Activated T-helper 2 cell treated with anti-CD3 and anti-CD28 coated beads, Interferon-gamma antibody, Interleukin-2, Interleukin-4, amounts not matched to agents 10 μg/mL and 5 μg/mL and 100 μg/mL, durations not matched to agents 14 hours and 24 hours and 36 hours (primary cell): ENCODE measurements at regions of chr22 and their contacts with region 1.

Region 1: GRCh38 chr22:20858615-20859416 is at the starts of genes PI4KA and SNAP29:
- DNase-seq: peak; percentile 98
- H3K4me3 Mint-ChIP-seq: peak within 1 kb of the TSS; percentile 87
- H3K27ac Mint-ChIP-seq: peak within 1 kb of the TSS; percentile 73
- H3K4me1 Mint-ChIP-seq: peaks cover 37% of the 10 kb centered on the region
- H3K27me3 Mint-ChIP-seq: no peaks in the 10 kb centered on the region
- total RNA-seq, gene PI4KA: 73.4 and 77.7 TPM in 2 replicates
- total RNA-seq, gene SNAP29: 24.2 and 31.4 TPM in 2 replicates

Region 2: DNA sequence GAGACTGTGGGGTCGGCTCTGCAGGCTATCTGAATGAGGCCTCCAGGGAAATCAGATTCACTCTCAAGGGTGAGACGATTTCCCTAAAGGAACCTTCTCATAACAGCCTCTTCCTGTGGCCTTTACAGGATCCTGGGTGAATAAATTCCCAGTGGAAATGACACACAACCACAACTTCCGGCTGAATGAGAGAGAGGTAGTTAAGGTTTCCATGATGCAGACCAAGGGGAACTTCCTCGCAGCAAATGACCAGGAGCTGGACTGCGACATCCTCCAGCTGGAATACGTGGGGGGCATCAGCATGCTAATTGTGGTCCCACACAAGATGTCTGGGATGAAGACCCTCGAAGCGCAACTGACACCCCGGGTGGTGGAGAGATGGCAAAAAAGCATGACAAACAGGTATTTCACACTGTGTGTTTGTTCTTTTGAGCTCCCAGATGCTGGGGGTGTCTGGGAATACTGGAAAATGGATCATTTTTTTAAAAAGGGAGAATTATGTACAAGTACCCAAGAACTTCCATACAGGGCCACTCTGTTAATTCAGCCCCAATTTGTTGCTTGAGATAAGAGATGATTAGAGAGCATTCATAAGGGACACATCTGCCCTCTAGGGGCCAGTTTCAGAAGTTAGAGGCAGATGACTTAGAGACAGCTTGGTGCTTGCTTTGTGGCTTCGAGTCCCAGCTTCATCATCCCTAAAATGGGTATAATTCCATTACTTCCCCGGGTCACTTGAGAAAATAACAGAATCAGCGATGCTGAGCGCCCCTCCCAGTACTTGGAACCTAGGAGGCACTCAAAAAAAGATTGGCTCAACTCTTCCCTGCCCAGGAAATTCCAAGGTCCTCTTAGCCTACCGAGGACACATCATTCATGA is 74.7 kb before region 1 on chr22:
- intact Hi-C with region 1: loop called (anchors 10 kb)
- DNase-seq: peak; percentile 16
- H3K4me3 Mint-ChIP-seq: no peak overlapping the region
- H3K27ac Mint-ChIP-seq: peak overlapping the region; percentile 17
- H3K4me1 Mint-ChIP-seq: peaks cover 29% of the 10 kb centered on the region
- H3K27me3 Mint-ChIP-seq: no peaks in the 10 kb centered on the region

Region 3: GRCh38 chr22:20899827-20900423 is 41.1 kb after region 1 on chr22:
- intact Hi-C with region 1: no loop called
- DNase-seq: no peak
- H3K4me3 Mint-ChIP-seq: no peak overlapping the region
- H3K27ac Mint-ChIP-seq: no peak overlapping the region
- H3K4me1 Mint-ChIP-seq: no peaks in the 10 kb centered on the region
- H3K27me3 Mint-ChIP-seq: peaks cover 8% of the 10 kb centered on the region

Region 4: DNA sequence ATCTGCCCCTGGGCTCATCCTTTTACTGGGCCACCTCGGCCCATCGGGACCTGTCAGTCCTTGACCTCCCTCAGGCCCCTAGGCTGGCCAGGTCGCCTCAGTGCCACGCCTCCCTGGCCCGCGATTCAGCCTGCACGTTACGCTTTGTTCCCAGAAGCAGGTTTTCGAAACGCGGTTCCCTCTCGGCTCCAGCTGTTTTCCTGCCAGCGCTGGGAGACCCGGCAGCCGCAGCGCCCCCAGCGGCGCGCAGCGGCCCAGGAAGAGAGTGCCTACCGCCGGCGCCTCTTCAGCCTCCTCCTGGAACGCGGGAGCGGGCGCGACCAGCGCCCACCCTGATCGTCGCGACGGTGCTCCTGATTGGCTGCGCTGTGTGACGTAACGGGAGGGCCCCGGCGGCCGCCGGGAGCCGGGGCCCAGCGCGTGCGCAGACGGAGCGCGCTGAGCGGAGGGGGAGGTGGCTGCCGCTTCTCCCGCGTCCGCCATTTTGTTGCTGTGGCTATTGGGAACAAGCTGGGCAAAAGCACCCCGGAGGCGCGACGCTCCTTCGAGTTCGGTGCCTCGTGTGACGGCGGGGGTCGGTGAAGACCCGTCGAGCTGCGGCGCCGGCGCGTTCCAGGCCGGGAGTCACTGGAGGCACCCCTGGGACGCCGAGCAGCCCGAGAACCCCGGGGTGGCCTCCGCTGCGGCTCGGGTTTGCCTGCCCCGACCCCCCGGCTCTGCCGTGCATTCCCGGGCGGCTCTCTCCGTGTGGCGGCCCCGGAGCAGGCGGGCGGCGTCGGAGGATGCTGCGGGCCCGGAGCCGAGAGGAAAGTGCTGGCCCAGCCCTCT is 58.4 kb after region 1 on chr22 and contains the start of gene CRKL:
- intact Hi-C with region 1: loop called (anchors 1 kb)
- DNase-seq: peak; percentile 95
- H3K4me3 Mint-ChIP-seq: peak within 1 kb of the TSS; percentile 94
- H3K27ac Mint-ChIP-seq: peak within 1 kb of the TSS; percentile 82
- H3K4me1 Mint-ChIP-seq: peaks cover 27% of the 10 kb centered on the region
- H3K27me3 Mint-ChIP-seq: peaks cover 3% of the 10 kb centered on the region
- total RNA-seq, gene CRKL: 79.2 and 80.1 TPM in 2 replicates

Region 5: DNA sequence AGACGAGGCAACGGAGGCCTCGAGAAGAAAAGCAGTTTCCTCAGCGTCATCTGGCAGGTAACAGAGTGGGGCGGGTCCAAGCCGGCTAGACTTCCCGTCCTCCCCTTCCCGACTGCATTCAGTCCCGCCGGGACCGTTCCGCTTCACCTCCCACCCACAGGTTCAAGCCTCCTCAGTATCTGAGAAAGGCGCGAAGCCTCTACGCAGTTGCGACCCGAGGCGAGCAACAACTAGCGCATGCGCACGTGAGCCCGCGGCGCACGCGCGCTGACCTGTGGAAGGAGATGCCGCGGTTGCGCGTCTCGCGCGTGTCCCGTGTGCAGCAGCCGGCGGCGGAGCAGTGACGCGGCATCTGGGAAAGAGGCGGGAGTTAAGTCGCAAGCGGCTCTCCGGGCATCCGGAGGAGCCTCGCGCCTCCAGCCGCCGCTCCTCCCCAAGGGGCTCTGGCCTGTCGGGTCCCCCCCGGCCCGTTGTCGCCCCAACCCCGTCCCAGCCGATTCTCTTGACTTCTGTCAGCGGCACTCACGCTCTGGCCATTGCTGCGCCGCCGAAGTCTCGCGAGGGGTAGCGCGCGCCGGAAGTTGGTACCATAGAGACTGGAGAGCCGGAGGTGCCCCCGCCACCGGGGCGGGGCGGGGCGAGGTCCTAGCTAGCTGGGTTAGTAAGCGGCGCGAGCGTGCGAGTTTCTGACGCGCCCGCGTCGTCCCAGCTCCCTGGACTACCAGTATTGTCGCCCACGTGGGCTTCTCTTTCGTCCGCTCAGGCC is 142.9 kb after region 1 on chr22 and contains the start of gene THAP7:
- intact Hi-C with region 1: loop called (anchors 2 kb)
- DNase-seq: peak; percentile 95
- H3K4me3 Mint-ChIP-seq: peak within 1 kb of the TSS; percentile 95
- H3K27ac Mint-ChIP-seq: peak within 1 kb of the TSS; percentile 98
- H3K4me1 Mint-ChIP-seq: peaks cover 15% of the 10 kb centered on the region
- H3K27me3 Mint-ChIP-seq: no peaks in the 10 kb centered on the region
- total RNA-seq, gene THAP7: 25.8 and 25.9 TPM in 2 replicates

Region 6: DNA sequence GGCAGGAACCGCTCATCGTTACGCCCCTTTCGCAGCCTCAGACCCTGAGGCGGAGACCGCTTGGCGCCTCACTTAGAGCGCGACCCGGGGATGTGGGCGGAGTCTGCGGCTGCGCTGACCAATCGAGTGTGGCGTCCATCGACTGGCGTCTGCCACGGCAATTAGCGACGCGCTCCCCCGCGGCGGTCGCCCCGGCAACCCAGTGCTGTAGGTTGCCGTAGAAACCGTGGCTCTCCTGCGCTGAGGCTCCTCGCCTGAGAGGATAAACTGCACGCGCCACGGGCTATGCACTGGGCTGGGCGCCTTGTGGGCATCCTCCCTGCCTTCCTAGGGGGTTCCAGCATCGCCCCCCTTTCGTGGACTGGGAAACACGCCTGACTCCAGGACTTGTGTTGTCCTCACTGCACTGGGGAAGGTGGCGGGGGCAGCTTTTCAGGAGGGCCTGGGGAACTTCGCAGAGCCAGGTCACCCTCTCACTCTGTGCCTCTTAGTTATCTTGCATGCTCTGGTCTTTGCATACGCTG is 155.4 kb after region 1 on chr22:
- intact Hi-C with region 1: loop called (anchors 1 kb)
- DNase-seq: peak; percentile 83
- H3K4me3 Mint-ChIP-seq: peak overlapping the region; percentile 82
- H3K27ac Mint-ChIP-seq: peak overlapping the region; percentile 53
- H3K4me1 Mint-ChIP-seq: peaks cover 10% of the 10 kb centered on the region
- H3K27me3 Mint-ChIP-seq: peaks cover 3% of the 10 kb centered on the region